ENCODE measurements at regions of chr17 and their contacts with region 1.

Region 1: DNA sequence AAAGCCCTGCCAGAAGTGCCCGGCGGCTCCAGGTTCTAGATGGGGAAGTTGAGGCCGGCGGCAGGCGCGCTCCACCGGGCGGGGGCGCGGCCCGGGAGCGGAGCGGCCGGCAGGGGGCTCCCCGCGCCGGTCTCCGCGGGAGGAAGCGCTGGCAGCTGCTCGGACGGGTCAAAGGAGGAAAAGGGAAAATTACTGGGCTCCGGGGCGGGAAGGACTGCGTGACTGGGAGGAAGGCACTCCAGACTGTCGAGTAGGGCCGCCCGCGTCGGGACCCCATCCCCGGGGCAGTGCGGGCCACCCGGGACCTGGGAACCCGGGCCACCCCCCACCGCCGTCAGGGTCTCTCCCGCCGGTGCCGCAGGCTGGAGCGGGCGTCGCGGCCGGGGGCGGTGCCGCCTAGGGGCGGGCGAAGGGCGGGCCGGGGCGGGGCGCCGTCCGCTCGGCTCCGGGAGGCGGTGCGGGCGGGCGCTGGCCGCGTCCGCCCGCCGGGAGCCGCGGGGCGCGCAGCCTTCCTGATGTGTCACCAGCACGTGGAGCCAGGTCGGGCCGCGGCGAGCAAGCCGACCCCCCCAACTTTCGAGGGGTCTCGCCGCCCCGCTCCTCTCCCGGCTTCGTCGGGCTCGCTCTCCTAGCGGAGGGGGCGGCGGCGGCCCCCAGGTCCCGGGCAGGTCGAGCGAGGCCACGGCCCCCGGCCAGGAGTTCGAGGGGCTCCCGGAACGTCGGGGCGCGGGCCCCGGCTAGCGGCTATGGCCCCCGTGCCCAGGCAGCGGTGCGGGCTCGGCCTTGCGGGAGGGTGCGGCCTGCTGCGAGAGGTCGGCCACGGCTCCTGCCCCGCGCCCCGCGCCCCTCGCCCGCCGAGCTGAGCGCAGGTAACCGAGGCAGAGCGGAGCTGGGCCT is 167.5 kb downstream of the RAB11FIP4 start:
- DNase-seq: peak; percentile 31
- H3K4me3 Mint-ChIP-seq: peak overlapping the region; percentile 76
- H3K27ac Mint-ChIP-seq: peak overlapping the region; percentile 18
- H3K4me1 Mint-ChIP-seq: peaks cover 13% of the 10 kb centered on the region
- H3K27me3 Mint-ChIP-seq: peaks cover 19% of the 10 kb centered on the region

Region 2: GRCh38 chr17:31858642-31859473 is 299.9 kb after region 1 on chr17 and contains the start of gene COPRS:
- intact Hi-C with region 1: loop called (anchors 2 kb)
- DNase-seq: peak; percentile 74
- H3K4me3 Mint-ChIP-seq: peak within 1 kb of the TSS; percentile 83
- H3K27ac Mint-ChIP-seq: peak within 1 kb of the TSS; percentile 82
- H3K4me1 Mint-ChIP-seq: peaks cover 28% of the 10 kb centered on the region
- H3K27me3 Mint-ChIP-seq: peaks cover 2% of the 10 kb centered on the region
- total RNA-seq, gene COPRS: 62.2 and 64.6 TPM in 2 replicates

Measured in activated T-helper 1 cell treated with anti-CD3 and anti-CD28 coated beads, Interleukin-12 subunit alpha, Interleukin-12 subunit beta, Interleukin-2, Interleukin-4 antibody, amounts not matched to agents 30 ng/mL and 10 ng/mL and 1 ng/mL, durations not matched to agents 14 hours and 24 hours and 36 hours (primary cell).